ENCODE measurements at regions of chr10 and their contacts with region 1.

Region 1: DNA sequence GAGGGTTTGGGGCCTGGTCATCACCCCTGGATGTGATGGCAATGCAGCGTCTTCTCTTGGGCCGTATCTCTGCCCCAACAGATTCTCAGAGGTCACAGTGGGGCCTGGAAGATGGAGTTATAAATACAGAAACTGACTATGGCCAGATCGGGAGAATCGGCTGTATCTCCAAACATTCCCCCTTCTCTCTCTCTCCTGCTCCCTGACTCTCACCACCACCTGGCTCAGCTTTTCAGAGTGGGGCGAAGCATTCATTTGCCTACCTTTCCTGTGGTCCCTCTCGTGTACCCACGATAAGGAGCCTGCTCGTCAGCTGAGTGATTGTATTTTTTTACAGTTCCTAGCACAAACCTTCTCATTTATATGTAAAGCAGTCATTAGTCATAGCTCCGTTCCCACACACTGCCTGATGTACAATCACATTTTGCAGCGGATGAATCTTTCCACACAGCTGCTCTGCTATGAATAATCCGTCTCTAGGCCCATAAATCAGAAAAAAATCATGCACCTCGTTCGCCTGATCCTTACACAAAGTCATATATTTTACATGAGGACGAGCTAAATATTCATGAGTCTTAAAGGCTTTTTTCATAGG is 23.2 kb upstream of the BTRC start:
- DNase-seq: peak; percentile 23
- H3K4me3 ChIP-seq: no peak overlapping the region
- CTCF ChIP-seq: no peak

Region 2: GRCh38 chr10:101238732-101239105 is 92.0 kb before region 1 on chr10:
- in situ Hi-C with region 1: no loop called
- DNase-seq: no peak
- H3K4me3 ChIP-seq: no peak overlapping the region
- CTCF ChIP-seq: peak; percentile 82

Region 3: DNA sequence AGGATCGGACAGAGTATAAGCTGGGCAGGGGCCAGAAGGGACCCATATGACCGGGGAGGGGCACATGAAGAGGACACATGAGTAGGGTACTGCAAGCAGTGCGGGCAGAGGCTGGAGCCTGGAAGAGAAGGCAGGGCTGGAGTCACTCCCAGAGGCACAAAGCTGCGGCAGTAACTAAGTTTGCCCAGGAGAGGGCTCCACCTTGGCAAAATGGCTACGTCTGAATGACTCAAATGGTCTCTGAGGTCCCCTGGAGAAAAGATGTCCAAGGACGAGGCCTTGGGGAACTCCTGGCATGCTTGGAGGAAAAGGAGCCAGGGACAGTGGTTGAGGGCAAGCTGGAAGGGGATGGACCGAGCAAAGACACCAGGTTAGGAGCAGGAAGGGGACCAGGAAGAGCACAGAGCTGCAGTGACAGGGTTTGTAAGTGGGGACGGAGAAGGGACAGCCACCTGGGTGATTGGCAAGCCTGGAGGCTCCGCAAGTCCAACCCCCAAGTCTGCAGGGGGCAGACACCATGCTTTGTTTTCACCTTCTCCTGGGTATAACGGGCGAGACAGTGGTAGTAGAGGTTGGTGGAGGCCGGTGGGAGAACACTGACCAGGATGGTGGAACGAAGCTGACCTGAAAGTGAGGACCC is 58.4 kb before region 1 on chr10:
- in situ Hi-C with region 1: no loop called
- DNase-seq: peak; percentile 34
- H3K4me3 ChIP-seq: no peak overlapping the region
- CTCF ChIP-seq: peak; percentile 83

Region 4: GRCh38 chr10:101287997-101288635 is 42.6 kb before region 1 on chr10:
- in situ Hi-C with region 1: loop called (anchors 5 kb)
- DNase-seq: no peak
- H3K4me3 ChIP-seq: no peak overlapping the region
- CTCF ChIP-seq: peak; percentile 45

Region 5: DNA sequence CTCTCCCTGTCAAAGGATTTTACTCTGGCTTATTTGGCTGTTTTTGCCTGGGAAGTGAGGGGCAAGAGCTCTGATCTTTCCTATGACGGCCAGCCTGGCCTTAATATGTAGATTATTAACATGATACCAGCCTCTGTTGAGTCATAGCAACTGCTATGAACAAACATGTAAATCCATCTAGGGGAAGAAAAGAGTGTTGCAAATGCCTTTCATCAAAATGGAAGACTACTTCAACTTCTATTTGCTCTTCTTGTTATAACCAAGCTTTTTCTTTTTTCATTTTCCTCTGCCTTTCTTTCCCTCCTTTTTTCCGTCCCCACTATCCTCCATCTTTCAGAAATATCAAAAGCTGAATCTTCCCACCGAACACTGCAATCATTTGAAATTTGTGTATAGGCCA is 69.9 kb after region 1 on chr10:
- in situ Hi-C with region 1: no loop called
- DNase-seq: no peak
- H3K4me3 ChIP-seq: no peak overlapping the region
- CTCF ChIP-seq: no peak